ENCODE measurements at regions of chr5 and their contacts with region 1.

Region 1: DNA sequence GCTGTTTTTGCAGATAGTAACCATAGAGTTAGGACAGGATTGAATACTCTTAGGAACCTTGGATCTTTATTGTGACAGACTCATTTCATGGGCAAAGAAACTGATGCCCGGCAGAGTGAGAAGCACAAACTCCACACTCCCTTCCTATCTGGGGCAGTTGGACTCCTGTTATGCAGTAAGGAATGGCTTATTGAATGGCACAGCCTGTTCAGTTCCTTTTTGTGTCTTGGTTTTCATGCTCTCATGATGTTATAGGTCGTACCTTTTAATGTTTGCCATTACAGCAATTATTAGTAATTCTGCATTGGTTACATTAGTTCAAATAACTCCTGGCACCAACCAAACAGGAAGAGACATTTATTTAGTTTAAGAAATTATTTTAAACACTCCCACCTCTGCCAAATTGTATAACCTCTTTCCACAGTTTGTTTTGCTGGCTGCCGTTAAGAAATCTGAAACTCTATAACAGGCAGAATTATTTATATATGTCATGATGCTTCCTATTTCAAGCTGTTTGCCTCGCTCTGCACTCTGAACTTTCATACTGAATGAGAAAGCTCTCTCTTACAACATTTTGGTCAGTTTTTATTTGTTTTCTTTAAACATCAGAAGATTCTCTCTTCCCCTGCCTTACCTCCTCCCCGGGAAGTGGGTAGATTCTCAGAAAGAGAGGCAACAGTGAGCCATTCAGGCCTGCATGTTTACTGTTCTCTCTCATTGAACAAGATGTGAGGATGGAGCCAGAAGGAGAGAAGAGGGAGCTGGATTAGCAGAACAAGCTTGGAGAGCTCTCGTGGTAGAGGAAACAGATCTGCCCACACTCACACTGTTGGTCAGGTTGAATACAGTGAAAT is 144.4 kb downstream of the ARHGEF28 start:
- DNase-seq: no peak
- H3K4me3 ChIP-seq: no peak overlapping the region
- H3K27ac ChIP-seq: no peak overlapping the region
- H3K4me1 ChIP-seq: no peaks in the 10 kb centered on the region
- H3K27me3 ChIP-seq: no peaks in the 10 kb centered on the region
- CTCF ChIP-seq: no peak
- POLR2A ChIP-seq: no peak

Region 2: DNA sequence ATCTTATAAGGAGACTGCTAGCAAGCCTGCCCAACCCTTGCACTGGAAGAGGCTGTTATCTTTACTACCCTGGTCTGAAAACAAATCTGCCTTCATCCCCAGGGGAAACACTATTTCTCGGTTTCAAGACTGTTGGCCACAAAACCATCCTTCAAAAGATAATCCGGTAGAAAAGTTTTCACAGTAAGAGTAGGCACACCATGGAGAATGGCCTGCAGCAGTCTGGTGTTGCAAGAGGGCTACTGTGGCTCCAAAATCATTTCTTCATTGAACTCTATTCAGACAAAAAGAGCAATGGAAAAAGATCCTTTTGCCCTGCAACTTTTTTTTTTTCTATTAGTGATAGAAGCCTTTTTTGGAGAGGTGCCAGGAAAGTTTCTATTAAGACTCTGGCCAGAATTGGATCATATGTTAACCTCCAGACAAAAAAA is 19.5 kb after region 1 on chr5:
- intact Hi-C with region 1: loop called (anchors 2 kb)
- DNase-seq: no peak
- H3K4me3 ChIP-seq: no peak overlapping the region
- H3K27ac ChIP-seq: no peak overlapping the region
- H3K4me1 ChIP-seq: no peaks in the 10 kb centered on the region
- H3K27me3 ChIP-seq: no peaks in the 10 kb centered on the region
- CTCF ChIP-seq: no peak
- POLR2A ChIP-seq: no peak